Posterior vena cava (tissue), 2 donors: ENCODE measurements at regions of chr6 and their contacts with region 1.

Region 1: DNA sequence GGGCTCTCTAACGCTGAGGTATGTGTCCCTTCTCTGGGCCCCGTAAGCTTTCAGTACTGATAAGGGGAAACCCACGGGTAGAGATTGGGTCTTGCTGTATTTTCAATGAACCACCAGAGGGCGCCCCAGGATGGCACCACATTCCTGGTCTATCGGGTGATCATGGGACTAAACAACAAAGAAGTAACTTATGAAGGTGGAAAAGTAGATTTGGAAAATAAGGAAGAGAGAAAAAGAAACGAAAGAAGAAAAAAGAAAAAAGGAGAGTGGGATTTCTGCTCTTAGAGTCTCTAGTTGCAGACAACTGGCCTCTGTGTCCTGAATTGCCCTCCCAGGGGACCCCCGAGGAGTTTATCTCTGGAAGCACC is 93.8 kb downstream of the GMPR start:
- DNase-seq: peak; percentile 90

Region 2: DNA sequence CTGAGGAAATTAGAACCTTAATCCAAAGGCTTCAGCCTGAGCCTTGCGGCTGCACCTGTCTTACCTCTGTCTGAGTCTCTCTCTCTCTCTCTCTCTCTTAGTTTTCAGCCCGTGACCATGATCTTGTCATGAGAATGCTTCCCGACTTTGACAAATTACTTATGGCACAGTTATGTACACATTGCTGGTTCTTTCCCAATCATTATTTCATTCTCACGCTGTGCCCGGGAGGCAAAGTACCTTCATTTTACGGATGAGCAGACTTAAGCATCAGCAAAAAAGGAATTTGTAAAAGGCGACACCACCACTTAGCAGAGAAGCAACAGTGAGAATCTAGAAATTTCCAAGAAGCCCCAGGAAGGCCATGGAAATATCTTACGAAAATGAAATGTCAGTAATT is 39.2 kb before region 1 on chr6:
- intact Hi-C with region 1: loop called in 1 of 2 experiments (anchors 5 kb)
- DNase-seq: no peak

Region 3: GRCh38 chr6:16409531-16410441 is 77.6 kb after region 1 on chr6:
- intact Hi-C with region 1: loop called (anchors 2 to 5 kb)
- DNase-seq: no peak

Region 4: DNA sequence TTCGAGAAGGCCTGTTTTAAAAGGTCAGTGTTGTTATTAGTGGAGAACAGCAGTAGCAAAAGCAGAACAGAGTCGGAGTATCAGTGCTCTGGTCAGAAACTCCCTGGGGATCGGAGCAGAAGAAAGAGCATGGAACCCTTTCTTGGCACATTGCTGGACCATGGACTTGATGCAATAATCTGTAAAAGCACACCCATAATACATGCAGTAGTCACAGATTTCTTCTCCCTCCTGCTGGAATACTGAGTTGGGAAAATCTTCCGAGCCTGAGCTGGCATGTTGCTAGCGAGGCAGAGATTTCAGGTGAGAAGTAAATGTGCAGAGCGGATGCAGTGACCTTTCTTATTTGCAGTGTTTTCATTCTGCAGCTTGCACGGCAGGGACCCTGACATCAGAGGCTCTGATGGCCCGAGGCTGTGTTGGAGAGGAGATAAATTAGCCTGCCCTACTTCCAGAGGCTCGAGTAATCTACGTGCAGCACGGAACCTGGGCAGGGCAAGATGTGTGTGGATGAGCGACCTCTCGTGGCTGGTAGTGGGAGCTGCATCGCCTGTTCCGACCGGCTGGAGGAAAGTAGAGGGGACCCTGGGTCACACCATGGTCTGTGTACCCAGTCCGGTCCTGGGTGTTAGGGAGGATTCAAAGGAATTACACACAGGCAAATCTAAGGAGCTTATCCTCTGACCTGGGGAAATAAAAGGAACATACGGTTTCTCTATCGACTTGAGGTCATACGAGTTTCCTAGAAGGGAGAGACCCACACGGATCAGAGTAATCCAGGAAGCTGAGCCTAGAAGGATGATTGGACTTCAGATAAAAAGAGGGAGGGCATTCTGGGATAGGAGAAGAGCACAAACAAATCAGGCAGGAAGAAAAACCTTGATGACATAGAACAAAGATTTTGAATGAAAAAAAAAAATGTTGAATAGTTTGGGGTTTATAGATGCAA is 632.7 kb after region 1 on chr6:
- intact Hi-C with region 1: loop called in 1 of 2 experiments (anchors 2 kb)
- DNase-seq: peak; percentile 85

Region 5: GRCh38 chr6:17086469-17086868 is 754.3 kb after region 1 on chr6:
- intact Hi-C with region 1: loop called in 1 of 2 experiments (anchors 10 kb)
- DNase-seq: no peak

Region 6: DNA sequence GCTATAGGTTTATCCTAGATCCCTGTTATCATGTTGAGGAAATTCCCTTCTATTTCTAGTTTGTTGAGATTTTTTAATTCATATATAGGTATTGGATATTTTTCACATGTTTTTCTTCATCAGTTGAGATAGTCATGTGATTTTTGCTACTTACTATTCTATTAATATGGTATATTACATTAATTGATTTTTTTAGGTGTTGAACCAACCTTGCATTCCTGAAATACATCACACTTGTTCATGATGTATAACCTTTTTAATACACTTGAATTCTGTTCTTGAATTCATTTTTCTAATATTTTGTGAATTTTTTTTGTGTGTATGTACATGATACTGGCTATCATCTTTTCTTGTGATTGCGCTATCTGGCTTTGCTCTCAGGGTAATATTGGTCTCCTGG is 1035.7 kb after region 1 on chr6:
- intact Hi-C with region 1: no loop called
- DNase-seq: no peak